Left ventricle myocardium inferior (tissue), 1 donor: ENCODE measurements at regions of chr12 and their contacts with region 1.

Region 1: DNA sequence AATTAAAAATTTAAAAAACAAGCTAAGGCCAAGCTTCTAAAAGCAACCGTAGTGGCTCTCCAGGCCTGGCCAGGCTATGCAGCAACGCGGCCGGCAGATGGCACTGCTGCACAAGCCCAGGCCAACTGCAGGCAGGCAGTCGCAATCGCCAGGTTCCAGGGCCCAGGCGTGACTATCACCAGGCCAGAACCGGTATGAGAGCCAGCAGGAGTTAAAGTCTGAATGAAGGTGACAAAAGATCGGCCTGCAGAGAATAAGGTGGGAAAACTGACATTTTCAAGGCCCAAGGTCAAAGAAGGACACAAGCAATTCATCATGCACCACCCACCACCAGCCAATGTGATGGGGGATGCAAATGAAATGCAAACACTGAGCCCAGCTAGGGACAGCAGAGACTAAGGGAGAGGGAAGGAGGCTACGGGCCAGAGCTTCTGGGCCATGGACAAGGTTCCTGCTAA is 43.6 kb upstream of the ANO2 start:
- DNase-seq: peak; percentile 71
- H3K4me3 ChIP-seq: no peak overlapping the region
- H3K27ac ChIP-seq: no peak overlapping the region
- H3K4me1 ChIP-seq: peaks cover 6% of the 10 kb centered on the region
- H3K27me3 ChIP-seq: no peaks in the 10 kb centered on the region
- CTCF ChIP-seq: peak; percentile 96

Region 2: DNA sequence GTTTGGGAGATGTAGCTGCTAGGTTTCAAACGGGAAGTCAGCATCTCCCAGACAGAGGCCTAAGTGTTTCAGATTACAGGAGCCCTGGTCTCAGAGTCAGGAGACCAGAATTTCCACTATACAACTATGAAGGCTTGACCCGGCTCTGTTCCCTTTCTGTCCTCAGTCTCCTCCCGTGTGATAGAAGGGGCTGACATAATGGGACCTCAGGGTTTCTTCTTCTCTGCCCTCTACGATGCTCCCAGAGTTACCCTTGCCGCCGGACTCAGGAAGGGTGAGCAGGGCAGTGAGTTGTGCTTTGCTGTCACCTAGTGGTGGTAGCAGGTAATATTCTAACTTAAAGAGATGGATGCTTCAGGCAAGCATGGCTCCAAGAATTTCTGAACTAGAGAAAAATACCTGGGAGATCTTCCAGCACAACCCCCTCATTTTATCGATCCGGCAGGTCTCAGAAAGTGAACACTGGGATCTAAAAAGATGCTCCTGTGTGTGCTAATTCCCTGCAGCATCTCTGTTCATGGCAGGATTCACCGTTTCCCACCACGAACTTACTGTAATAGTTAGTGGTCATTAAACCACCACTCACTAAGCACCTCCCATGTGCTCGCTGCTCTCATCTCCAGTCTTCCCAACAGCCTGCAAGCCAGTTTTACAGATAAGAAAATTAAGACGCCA is 51.3 kb after region 1 on chr12:
- intact Hi-C with region 1: loop called (anchors 2 kb)
- DNase-seq: no peak
- H3K4me3 ChIP-seq: no peak overlapping the region
- H3K27ac ChIP-seq: no peak overlapping the region
- H3K4me1 ChIP-seq: no peaks in the 10 kb centered on the region
- H3K27me3 ChIP-seq: no peaks in the 10 kb centered on the region
- CTCF ChIP-seq: peak; percentile 89